GM10248 (cell line): ENCODE measurements at regions of chr17 and their contacts with region 1.

Region 1: GRCh38 chr17:74790161-74791054 is 14.3 kb upstream of the NAT9 start:
- DNase-seq: no peak
- CTCF ChIP-seq: no peak

Region 2: DNA sequence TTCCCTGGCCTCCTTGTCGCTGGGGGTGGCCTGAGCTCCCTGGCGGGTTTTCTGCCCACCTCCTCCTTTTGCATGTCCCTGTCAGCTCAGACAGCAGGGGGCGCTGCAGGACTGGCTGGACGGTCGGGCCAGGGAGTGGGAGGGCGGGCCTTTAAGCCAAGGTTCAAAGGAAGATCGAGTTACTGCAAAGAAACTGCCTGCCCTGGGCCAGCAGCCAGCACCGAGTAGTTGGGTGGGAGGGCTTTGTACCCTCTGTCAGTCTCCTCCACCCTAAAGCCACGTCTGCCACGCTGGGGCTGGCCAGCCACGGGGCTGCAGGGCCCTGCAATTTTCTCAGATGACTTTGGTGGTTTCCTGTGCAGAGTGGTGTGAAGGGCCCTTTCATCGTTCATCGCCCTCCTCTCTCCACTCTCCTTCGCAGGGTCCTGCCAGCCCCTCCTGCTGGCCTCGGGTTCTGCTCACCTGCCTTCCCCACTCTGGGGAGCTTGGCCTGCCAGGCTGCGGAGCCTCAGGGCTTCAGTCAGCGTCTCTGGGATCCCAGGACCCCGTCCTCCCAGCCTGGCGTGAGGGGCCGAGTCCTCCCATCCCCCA is 410.8 kb before region 1 on chr17:
- CTCF ChIA-PET with region 1: no interaction called
- POLR2A ChIA-PET with region 1: no interaction called
- DNase-seq: peak; percentile 92
- CTCF ChIP-seq: peak; percentile 97

Region 3: DNA sequence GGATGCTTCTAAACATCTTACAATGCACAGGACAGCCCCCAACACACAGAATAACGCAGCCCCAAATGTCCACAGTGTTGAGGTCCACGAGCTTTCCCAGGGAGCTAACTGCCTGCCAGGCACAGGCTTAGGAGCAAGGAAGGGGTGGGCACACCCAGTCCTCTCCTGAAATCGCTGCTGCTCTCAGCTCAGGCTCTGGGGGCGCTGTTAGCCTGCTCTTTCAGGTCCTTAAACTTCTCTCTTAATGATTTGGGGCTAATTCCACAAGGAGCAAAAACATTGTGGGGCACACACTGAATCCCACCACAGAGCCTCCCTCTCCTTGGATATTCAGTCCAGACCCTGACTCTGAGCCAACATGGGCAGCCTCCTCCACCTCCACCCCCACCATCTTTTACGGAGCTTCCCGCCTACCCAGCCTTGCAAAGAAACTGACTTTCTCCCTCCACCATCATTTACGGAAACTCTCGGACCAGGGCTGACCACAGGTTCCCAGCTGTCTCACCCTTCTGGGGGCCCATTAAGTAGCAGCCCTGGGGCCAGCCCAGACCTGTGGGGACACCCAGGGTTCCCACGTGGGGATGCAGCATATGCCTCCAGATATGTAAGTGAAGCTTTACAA is 224.2 kb before region 1 on chr17:
- CTCF ChIA-PET with region 1: no interaction called
- POLR2A ChIA-PET with region 1: no interaction called
- DNase-seq: peak; percentile 55
- CTCF ChIP-seq: peak; percentile 58

Region 4: GRCh38 chr17:74748529-74749365 is 41.7 kb before region 1 on chr17 and contains the start of gene NHERF1:
- CTCF ChIA-PET with region 1: interaction called, 23 read pairs
- POLR2A ChIA-PET with region 1: no interaction called
- DNase-seq: peak; percentile 99
- CTCF ChIP-seq: peak; percentile 19

Region 5: DNA sequence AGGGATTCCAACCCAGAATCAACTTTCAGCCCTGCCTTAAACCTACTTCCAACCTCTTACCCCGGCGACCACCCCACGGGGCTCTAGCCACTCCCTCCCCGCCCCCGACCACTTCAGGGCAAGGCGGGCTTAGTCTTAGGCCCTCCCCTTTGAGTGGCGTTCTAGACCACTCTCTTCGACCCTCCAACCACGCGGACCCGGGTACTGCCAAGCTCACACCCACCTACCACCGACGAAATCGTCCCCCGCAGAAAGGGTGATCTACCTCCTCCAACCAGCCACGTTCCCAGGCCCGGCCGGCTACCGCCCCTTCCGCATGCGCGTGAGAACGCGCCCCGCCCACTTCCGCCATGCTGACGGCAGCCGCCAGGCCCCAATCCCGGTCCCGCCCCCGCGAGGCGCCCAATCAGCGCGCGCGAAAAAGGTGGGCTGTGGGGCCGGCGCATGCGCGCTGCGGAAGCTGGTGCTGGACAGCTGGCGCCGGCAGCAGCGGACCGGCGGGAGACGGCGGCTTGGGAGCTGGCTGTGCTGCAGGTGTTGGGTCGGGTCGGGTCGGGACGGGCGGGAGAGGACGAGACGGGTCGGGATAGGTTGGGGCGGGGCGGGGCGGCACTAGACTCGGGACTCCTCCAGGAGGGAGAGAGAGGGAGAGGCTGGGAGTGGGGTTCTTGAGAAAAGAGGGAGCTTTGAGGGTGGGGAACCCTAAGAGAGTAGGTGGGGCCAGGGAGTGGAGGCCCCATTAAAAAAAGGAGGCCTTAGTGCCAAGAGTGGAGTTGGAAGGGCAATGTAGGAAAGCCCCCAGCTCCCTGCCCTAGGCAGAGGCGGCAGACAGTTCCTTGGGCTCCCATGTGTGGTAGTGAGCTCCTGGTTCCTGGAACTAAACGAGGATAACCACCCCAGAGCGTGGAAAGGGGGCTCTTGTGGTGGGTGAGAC is 14.1 kb before region 1 on chr17 and contains the start of gene NAT9:
- CTCF ChIA-PET with region 1: interaction called, 143 read pairs
- POLR2A ChIA-PET with region 1: no interaction called
- DNase-seq: peak; percentile 100
- CTCF ChIP-seq: no peak

Region 6: GRCh38 chr17:74833501-74834377 is 43.3 kb after region 1 on chr17:
- CTCF ChIA-PET with region 1: interaction called, 18 read pairs
- POLR2A ChIA-PET with region 1: no interaction called
- DNase-seq: peak; percentile 76
- CTCF ChIP-seq: no peak

Region 7: DNA sequence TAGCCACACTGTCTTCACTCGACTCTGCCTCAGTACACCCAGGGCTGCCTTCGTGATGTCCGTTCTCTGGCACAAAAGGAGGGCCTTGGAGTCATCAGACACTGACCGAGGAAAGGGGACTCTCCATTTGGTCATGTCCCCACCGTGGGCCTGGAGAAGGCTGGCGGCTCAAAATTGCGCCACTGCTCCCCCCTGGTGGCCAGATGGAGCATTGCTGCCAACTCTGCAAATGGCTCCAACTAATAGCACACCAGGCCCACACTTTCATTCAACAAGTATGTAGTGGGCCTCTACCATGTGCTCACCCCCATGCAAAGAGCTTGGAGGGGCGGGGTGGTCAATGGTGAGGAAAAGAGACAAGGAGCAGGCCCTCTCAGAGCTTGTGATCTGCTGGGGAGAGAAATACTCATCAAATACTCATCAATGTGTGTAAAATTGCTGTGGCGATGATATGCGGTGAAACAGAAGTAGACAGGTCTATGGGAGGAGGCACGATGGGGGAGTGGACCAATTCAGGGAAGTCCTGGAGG is 74.5 kb after region 1 on chr17:
- CTCF ChIA-PET with region 1: interaction called, 248 read pairs
- POLR2A ChIA-PET with region 1: interaction called, 3 read pairs
- DNase-seq: peak; percentile 85
- CTCF ChIP-seq: peak; percentile 93

Region 8: DNA sequence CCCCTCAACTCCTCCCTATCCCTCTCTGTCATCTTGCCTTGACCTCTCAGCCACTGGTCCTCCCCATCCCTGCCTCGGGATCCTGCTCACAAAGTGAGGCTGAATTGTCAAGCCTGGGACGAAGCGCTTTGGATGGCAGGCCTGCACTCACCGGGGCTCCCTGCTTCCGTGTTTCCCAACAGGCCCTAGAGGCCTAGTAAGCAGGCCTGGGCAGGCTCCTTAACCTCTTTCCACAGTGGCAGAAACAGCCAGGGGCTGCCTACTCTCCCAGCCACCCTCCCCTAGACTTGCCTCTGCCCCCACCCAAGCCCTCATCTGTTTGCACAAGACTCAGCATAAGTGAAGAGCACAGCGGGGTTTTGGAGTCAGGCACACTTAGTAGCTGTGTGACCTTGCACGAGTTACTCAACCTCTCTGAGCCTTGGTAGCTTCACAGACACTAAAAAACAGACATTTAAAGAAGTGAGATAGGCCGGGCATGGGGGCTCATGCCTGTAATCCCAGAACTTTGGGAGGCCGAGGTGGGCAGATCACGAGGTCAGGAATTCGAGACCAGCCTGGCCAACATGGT is 108.1 kb after region 1 on chr17:
- CTCF ChIA-PET with region 1: no interaction called
- POLR2A ChIA-PET with region 1: no interaction called
- DNase-seq: no peak
- CTCF ChIP-seq: no peak

Region 9: DNA sequence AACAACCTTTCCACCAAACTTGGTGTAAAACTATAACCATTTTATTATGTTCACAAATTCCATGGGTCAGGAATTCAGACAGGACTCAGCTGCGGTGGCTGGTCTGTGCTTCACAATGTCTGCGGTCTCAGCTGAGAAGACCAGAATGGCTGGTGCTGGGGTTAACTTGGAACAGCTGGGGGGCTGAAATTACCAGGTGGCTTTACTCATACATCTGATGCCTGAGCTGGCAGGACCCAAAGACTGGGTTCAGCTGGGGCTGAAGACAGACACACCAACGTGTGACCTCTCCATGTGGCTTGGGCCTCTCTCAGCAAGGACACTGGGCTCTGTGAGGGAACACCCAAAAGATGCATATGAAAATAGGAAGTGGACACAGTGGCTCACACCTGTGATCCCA is 187.8 kb after region 1 on chr17:
- CTCF ChIA-PET with region 1: no interaction called
- POLR2A ChIA-PET with region 1: no interaction called
- DNase-seq: no peak
- CTCF ChIP-seq: no peak